A549 (cell line): ENCODE measurements at regions of chr15 and their contacts with region 1.

Region 1: GRCh38 chr15:77543159-77543882 is 89.4 kb downstream of the LINGO1 start:
- DNase-seq: peak; percentile 89 to 97
- ATAC-seq: peak; percentile 82 to 95
- H3K4me3 ChIP-seq: peak overlapping the region; percentile 57
- H3K27ac ChIP-seq: peak overlapping the region; percentile 79 to 93
- H3K4me1 ChIP-seq: peaks cover 18% of the 10 kb centered on the region
- CTCF ChIP-seq: peak; percentile 100
- EP300 ChIP-seq: no peak
- POLR2A ChIP-seq: peak; percentile 83
- RAD21 ChIP-seq: peak; percentile 89 to 93

Region 2: DNA sequence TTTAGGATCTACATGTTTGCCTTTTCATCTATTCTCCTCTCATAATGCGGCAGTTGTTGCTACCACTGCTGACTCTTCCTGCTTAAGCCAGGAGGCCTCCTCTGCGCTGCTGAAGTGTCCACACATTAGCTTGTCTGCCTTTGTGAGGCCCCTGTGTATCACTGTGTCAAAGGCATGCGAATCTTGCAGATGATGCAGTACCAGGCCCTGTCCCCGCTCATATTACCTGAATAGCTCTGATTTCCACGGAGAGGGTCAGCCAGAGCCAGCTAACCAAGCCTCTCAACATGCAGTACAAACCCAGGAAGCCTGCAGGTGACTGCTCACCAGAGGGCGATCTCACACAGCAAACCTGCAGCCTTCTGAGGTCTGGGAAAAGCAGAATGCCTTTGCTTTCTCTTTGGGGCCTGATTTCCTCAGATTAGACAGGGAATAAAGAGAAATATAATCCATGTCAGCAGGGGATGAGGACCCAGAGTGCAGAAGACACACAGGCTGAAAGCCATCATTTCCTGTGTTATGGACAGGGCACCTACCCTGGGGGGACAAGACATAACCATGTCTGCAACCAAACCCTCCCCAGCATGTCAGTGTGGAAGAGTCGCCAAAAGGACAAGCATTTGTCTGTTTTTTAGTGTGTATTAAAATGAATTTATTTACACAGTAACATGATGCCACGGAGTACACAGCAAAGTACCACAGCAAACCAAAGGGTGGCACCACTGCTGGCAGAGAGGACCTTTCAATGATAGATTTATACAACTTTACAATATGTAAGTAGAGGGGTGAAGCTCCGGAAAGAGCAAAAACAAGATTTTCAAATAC is 435.6 kb before region 1 on chr15:
- CTCF ChIA-PET with region 1: interaction called, 28 read pairs
- POLR2A ChIA-PET with region 1: no interaction called
- DNase-seq: peak; percentile 53 to 60
- ATAC-seq: peak; percentile 89 to 95
- H3K4me3 ChIP-seq: no peak overlapping the region
- H3K27ac ChIP-seq: no peak overlapping the region
- H3K4me1 ChIP-seq: no peaks in the 10 kb centered on the region
- CTCF ChIP-seq: peak; percentile 72
- EP300 ChIP-seq: no peak
- POLR2A ChIP-seq: no peak
- RAD21 ChIP-seq: peak; percentile 80 to 89

Region 3: DNA sequence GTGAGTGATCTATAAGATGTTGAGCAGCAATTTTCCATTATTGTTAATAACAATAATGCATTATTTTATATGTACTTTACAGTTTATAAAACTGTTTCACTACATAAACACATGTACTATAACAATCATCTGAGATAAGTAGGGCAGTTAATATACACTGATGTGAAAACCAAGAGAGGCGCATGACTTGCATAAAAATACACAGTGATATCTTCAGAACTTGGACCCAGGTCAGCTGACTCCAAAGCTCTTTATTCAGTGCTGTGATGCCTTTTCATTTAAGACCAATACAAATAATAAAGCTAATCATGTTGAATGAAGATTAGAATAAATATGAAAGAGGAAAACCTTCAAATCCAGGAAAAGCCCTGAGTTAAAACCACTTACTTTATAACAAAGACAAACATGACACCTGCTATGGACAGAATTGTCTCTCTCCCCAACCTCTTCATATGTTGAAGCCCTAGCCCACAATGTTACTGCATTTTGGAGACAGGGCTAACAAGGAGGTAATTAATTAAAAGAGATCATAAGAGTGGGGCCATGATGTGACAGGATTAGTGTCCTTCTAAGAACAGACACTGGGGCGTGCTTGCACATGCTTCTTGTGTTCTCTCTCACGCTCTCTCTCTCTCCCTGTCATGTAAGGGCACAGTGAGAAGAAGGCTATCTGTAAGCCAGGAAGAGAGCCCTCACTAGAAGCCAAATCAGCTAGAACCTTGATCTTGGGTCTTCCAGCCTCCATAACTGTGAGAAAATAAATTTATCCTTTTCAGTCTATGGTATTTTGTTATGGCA is 416.6 kb before region 1 on chr15:
- CTCF ChIA-PET with region 1: interaction called, 88 read pairs
- POLR2A ChIA-PET with region 1: no interaction called
- DNase-seq: no peak
- ATAC-seq: no peak
- H3K4me3 ChIP-seq: no peak overlapping the region
- H3K27ac ChIP-seq: no peak overlapping the region
- H3K4me1 ChIP-seq: no peaks in the 10 kb centered on the region
- CTCF ChIP-seq: no peak
- EP300 ChIP-seq: no peak
- POLR2A ChIP-seq: no peak
- RAD21 ChIP-seq: no peak

Region 4: GRCh38 chr15:77507911-77508310 is 35.4 kb before region 1 on chr15:
- CTCF ChIA-PET with region 1: interaction called, 26 read pairs
- POLR2A ChIA-PET with region 1: interaction called, 3 read pairs
- DNase-seq: no peak
- ATAC-seq: peak in 1 of 2 experiments; percentile 34; a peak in 1 of 6 replicates
- H3K4me3 ChIP-seq: no peak overlapping the region
- H3K27ac ChIP-seq: no peak overlapping the region
- H3K4me1 ChIP-seq: no peaks in the 10 kb centered on the region
- CTCF ChIP-seq: no peak
- EP300 ChIP-seq: no peak
- POLR2A ChIP-seq: no peak
- RAD21 ChIP-seq: no peak

Region 5: DNA sequence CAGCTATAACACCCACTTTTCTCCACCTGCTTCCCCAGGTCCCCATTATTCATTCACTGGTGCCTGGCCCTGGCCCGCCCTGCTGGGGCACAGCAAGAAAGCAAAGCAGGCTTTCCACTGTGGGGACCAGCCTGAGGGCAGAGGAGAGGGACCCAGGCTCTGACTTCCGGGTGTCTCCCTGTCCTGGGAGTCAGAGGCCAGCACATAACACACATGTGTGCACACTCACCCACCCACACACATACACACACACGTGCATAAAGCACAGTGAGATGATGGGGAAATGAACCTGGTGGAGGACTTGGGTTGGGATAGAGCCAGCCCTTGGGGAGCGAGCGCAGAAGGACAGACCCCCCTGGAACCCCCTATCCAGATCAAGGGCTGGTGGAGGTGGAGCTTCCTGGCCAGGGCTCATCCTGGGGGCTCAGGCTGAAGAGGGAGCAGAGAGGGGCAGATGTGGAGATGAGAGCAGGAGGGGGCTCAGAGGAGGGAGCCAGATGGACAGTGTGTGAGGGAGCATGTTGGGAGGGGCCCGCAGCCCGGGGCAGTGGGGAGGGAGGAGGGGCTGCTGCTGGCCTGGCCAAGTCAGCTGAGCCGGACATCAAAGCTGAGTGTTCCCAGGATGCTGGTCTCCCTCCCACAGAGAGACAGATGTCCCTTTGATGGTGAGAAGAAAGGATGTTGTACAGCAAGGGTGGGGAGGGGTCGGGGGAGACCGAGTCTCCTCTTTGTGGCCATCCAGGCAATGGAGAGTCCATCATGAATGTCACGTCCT is 11.2 kb after region 1 on chr15:
- CTCF ChIA-PET with region 1: interaction called, 60 read pairs
- POLR2A ChIA-PET with region 1: no interaction called
- DNase-seq: no peak
- ATAC-seq: no peak
- H3K4me3 ChIP-seq: no peak overlapping the region
- H3K27ac ChIP-seq: no peak overlapping the region
- H3K4me1 ChIP-seq: no peaks in the 10 kb centered on the region
- CTCF ChIP-seq: no peak
- EP300 ChIP-seq: no peak
- POLR2A ChIP-seq: no peak; the same call in 1 of the 2 replicates
- RAD21 ChIP-seq: no peak

Region 6: GRCh38 chr15:77597802-77598453 is 54.6 kb after region 1 on chr15:
- CTCF ChIA-PET with region 1: interaction called, 10 read pairs
- POLR2A ChIA-PET with region 1: interaction called, 3 read pairs
- DNase-seq: no peak
- ATAC-seq: no peak
- H3K4me3 ChIP-seq: no peak overlapping the region
- H3K27ac ChIP-seq: no peak overlapping the region
- H3K4me1 ChIP-seq: no peaks in the 10 kb centered on the region
- CTCF ChIP-seq: no peak
- EP300 ChIP-seq: no peak
- POLR2A ChIP-seq: no peak
- RAD21 ChIP-seq: no peak

Region 7: DNA sequence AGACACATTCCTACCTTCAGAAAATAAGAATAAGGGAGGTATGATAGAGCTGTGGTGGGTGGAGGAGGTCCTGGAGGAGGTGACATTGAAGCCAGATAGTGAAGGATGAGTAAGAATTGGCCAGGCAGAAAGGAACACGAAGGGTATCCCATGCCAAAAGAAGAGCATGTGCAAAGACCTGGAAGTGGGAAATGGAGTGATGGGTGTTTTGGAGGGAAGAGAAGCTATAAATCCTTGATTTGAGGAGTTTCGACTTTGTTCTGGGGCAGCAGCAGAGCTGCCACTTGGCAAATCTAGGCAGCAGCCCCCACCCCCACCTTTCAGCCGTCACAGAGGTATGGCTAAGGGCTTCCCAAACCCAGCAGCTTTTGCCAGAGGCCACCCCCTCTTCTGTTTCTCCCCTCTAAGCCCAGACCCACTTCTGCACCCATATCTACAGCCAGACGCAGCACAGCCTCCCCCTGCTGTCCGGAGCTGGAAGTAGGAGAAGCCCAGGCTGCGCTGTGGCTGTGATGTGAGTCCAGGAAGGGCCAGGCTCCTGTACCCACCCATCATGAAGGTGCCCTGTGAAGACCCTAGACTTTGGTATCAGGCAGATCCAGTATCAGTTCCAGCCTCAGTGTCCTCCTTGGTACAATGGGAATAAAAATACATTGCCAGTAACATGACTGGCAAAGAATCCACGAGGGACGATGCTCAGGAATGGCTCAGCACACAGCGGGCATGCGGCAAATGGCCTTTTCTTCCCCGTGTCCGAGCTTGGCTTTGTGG is 278.1 kb after region 1 on chr15:
- CTCF ChIA-PET with region 1: interaction called, 12 read pairs
- POLR2A ChIA-PET with region 1: interaction called, 3 read pairs
- DNase-seq: peak; percentile 77 to 93
- ATAC-seq: peak; percentile 76 to 92
- H3K4me3 ChIP-seq: no peak overlapping the region
- H3K27ac ChIP-seq: no peak overlapping the region
- H3K4me1 ChIP-seq: peaks cover 8% of the 10 kb centered on the region; the same call in 1 of the 3 replicates
- CTCF ChIP-seq: peak; percentile 81
- EP300 ChIP-seq: no peak
- POLR2A ChIP-seq: no peak
- RAD21 ChIP-seq: peak; percentile 90 to 95